Tibial artery (tissue), 4 donors: ENCODE measurements at regions of chrX and their contacts with region 1.

Region 1: DNA sequence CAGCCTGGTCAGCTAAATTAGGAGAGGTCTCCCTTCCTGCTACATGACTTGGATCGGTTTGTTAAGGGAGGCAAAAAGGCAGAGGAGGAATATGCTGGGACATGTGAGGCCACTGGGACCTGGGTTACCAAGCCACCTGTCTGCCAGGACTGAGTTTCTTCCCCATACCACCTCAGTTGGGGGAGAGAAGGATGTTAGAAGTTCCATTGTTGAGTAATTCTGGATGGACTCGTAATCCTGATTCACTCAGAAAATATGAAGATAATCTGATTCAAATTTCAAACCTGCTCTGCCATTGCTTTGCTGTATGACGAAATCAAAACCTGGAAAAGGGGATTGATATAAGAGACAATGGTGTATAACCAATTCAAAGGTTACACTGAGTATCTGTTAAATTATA is 97.4 kb upstream of the S100G start:
- DNase-seq: no peak
- H3K4me3 ChIP-seq: no peak overlapping the region
- H3K27ac ChIP-seq: no peak overlapping the region
- H3K4me1 ChIP-seq: no peaks in the 10 kb centered on the region
- H3K27me3 ChIP-seq: no peaks in the 10 kb centered on the region
- CTCF ChIP-seq: no peak

Region 2: GRCh38 chrX:16462912-16463311 is 89.6 kb before region 1 on chrX:
- intact Hi-C with region 1: no loop called
- DNase-seq: peak; percentile 22 to 62
- H3K4me3 ChIP-seq: no peak overlapping the region
- H3K27ac ChIP-seq: peak overlapping the region; percentile 55 to 59
- H3K4me1 ChIP-seq: peaks cover 0 to 11% (median 4%) of the 10 kb centered on the region in 4 donors
- H3K27me3 ChIP-seq: no peaks in the 10 kb centered on the region
- CTCF ChIP-seq: no peak

Region 3: DNA sequence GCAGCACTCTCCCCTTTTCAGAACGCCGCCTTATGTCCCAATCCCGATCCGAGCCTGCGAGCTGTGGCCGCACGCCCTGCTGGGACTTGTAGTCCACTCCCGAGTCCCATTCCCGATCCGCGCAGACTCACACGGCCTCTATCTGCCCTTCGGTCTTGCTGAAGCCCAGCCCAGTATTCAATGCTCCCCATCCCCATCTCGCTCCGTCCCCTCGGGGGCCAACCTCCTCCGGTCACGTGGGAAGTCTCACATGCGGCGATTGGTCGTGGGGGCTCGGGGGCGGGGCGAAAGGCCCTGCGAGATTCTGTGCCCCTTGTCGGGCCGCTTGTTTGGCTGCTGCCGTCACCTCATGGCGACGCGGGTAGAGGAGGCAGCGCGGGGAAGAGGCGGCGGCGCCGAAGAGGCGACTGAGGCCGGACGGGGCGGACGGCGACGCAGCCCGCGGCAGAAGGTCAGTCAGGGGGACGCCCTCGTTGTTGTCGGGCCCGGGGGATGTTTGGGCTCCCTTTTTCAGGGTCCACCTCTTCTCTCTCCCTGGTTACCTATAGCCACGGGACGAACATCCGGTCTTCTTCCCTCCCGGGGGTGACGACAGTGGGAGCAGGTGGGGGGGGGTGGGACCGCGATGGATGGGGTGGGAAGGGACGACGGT is 233.7 kb after region 1 on chrX and contains the start of gene TXLNG:
- intact Hi-C with region 1: no loop called
- DNase-seq: peak; percentile 97 to 99
- H3K4me3 ChIP-seq: peak within 1 kb of the TSS; percentile 69 to 79
- H3K27ac ChIP-seq: peak within 1 kb of the TSS; percentile 91 to 92
- H3K4me1 ChIP-seq: peaks cover 0 to 14% (median 0%) of the 10 kb centered on the region in 4 donors
- H3K27me3 ChIP-seq: no peaks in the 10 kb centered on the region
- CTCF ChIP-seq: no peak

Region 4: GRCh38 chrX:17021851-17022604 is 469.5 kb after region 1 on chrX:
- intact Hi-C with region 1: loop called (anchors 5 kb)
- DNase-seq: no peak
- H3K4me3 ChIP-seq: no peak overlapping the region
- H3K27ac ChIP-seq: no peak overlapping the region
- H3K4me1 ChIP-seq: no peaks in the 10 kb centered on the region
- H3K27me3 ChIP-seq: no peaks in the 10 kb centered on the region
- CTCF ChIP-seq: no peak